B cell (primary cell): ENCODE measurements at regions of chr11 and their contacts with region 1.

Region 1: DNA sequence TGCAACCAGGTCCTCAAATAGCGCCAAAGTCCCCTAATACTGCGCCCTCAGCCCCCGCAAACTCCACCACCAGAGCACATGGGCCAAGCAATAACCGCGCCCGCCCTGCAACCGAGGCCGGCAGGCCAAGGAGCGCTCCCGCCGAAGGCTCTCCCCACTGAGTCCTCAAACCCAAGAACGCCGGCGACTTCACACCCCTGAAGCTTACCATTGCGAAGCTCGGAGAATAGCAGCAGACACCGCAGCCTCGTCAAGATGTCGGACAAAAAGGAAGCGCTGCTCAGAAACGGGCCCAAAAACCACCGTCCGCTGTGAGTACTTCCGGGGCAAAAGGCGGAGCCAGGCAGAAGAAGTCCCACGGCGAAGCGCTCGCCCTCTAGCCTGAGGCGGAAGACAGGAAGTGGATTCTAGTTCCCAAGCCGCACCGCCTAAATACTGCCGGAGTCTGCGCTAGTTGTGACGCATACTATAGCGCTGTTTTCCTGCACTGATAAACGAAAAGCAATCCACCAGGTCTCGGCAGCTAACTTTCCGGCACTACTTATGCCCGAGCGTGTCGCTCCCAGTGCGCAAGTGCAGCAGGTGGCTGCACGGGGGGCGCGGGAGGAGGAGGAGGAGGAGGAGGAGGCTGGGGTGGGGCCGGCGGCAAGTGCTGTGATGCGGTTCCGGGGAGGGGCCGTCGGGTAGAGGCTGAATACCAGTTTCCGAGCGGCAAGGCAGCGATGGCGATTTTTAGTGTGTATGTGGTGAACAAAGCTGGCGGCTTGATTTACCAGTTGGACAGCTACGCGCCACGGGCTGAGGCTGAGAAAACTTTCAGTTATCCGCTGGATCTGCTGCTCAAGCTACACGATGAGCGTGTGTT is at the starts of genes RPS25 and TRAPPC4:
- DNase-seq: peak; percentile 98
- ATAC-seq: peak; percentile 91
- H3K4me3 ChIP-seq: peak within 1 kb of the TSS; percentile 85 to 98 (median 93)
- H3K4me3 Mint-ChIP-seq: peak within 1 kb of the TSS; percentile 100
- H3K27ac ChIP-seq: peak within 1 kb of the TSS; percentile 91 to 92
- H3K27ac Mint-ChIP-seq: peak within 1 kb of the TSS; percentile 100
- H3K4me1 ChIP-seq: peaks cover 27 to 34% of the 10 kb centered on the region in 2 donors
- H3K4me1 Mint-ChIP-seq: peaks cover 46% of the 10 kb centered on the region
- H3K27me3 ChIP-seq: no peaks in the 10 kb centered on the region
- H3K27me3 Mint-ChIP-seq: no peaks in the 10 kb centered on the region
- CTCF ChIP-seq: no peak
- total RNA-seq, gene RPS25: 1,713 and 1,823 TPM in 2 replicates
- total RNA-seq, gene TRAPPC4: 61.5 and 64.5 TPM in 2 replicates

Region 2: DNA sequence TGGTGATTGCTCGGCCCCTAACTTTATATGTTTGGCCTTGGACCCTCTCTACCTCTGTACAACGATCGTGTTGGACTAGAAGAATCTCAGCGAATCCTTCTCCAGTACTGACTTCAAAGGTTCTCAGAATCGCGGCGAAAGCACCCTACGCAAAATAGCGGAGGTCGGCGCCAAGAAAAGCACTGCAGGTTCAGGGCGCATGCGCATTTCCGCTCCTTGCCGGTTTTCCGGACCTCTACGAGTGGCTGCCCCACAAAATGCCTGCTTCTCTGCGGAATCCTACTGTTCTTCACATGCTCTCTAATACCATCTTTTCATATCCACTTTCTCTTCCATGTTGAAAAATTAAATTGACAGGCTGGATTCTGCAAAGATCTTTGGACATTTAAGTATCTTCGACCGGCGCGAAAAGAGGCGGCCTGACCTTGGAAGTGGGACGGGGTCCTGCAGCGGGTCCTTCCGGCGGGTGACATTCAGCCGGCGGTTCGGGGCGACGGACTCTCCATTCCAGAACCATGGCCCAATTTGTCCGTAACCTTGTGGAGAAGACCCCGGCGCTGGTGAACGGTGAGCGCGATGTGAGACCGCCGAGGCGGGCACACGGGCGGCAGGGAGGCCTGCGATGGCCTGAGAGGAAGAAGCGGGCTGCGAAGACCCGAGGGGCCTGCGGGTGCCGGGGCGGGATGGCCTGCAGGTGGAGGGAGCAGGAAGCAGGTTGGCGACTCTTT is 617.0 kb before region 1 on chr11 and contains the start of gene ATP5MG:
- CTCF ChIA-PET with region 1: no interaction called
- POLR2A ChIA-PET with region 1: no interaction called
- intact Hi-C with region 1: loop called (anchors 1 kb)
- DNase-seq: peak; percentile 97
- ATAC-seq: peak; percentile 84
- H3K4me3 ChIP-seq: peak within 1 kb of the TSS; percentile 77 to 96 (median 81)
- H3K4me3 Mint-ChIP-seq: peak within 1 kb of the TSS; percentile 98
- H3K27ac ChIP-seq: peak within 1 kb of the TSS; percentile 77 to 85
- H3K27ac Mint-ChIP-seq: peak within 1 kb of the TSS; percentile 100
- H3K4me1 ChIP-seq: peaks cover 27 to 32% of the 10 kb centered on the region in 2 donors
- H3K4me1 Mint-ChIP-seq: peaks cover 55% of the 10 kb centered on the region
- H3K27me3 ChIP-seq: no peaks in the 10 kb centered on the region
- H3K27me3 Mint-ChIP-seq: no peaks in the 10 kb centered on the region
- CTCF ChIP-seq: peak; percentile 18
- total RNA-seq, gene ATP5MG: 111 and 118 TPM in 2 replicates

Region 3: DNA sequence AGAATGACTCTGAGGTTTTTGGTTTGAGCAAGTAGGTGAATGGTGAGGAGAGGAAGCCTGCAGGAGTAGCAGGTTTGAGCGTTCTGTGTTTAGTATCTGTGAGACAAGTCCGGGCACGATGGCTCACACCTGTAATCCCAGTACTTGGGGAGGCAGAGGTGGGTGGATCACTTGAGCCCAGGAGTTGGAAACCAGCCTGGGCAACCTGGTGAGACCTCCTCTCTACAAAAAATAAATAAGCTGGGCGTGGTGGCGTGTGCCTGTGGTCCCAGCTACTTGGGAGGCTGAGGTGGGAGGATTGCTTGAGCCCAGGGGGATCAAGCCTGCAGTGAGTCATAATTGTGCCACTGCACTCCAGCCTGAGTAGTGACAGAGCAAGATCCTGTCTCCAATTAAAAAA is 30.0 kb before region 1 on chr11:
- CTCF ChIA-PET with region 1: no interaction called
- POLR2A ChIA-PET with region 1: no interaction called
- intact Hi-C with region 1: no loop called
- DNase-seq: no peak
- ATAC-seq: no peak
- H3K4me3 ChIP-seq: no peak overlapping the region
- H3K4me3 Mint-ChIP-seq: no peak overlapping the region
- H3K27ac ChIP-seq: no peak overlapping the region
- H3K27ac Mint-ChIP-seq: no peak overlapping the region
- H3K4me1 ChIP-seq: no peaks in the 10 kb centered on the region
- H3K4me1 Mint-ChIP-seq: no peaks in the 10 kb centered on the region
- H3K27me3 ChIP-seq: no peaks in the 10 kb centered on the region
- H3K27me3 Mint-ChIP-seq: no peaks in the 10 kb centered on the region
- CTCF ChIP-seq: no peak

Region 4: DNA sequence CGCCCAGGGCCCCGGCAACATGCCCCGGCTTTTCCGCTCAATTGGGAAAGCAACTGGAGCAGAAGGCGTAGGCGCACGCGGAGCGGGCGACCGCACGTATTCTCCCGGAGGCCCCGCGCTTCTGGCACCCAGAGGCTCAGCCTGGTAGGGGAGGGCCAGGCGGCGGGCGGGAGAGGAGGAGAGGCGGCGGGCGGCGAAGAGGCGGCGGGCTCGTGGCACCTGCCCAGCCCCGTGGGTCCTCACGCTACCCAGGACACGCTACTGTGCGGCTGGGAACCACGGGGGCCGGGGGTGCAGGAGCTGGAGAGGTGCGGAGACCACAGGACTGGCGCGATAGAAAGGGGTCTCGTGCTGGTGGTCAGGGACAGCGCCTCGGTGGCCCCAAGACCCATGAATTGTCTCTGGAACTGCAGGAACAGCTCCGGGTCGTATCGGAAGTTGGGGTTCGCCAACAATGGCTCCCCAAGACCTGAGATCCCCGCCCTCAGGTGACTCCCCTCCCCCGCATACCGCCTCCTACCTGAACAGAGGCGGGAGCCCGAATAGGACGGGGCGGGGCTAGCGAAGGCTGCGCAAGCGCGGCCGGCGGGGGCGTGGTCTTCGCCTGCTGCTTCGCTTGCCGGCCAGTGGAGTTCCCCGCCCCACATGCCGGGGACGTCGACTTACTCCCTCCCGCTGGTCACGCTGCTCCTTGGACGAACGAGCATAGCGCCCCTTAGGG is 12.2 kb after region 1 on chr11 and contains the start of gene SLC37A4:
- CTCF ChIA-PET with region 1: interaction called, 14 read pairs
- POLR2A ChIA-PET with region 1: interaction called, 5 read pairs
- intact Hi-C with region 1: loop called (anchors 1 kb)
- DNase-seq: peak; percentile 99
- ATAC-seq: peak; percentile 96
- H3K4me3 ChIP-seq: peak within 1 kb of the TSS in 4 of 5 experiments; percentile 80 to 89 (median 86)
- H3K4me3 Mint-ChIP-seq: peak within 1 kb of the TSS; percentile 92
- H3K27ac ChIP-seq: peak within 1 kb of the TSS; percentile 46 to 74
- H3K27ac Mint-ChIP-seq: peak within 1 kb of the TSS; percentile 82
- H3K4me1 ChIP-seq: peaks cover 4 to 10% of the 10 kb centered on the region in 2 donors
- H3K4me1 Mint-ChIP-seq: peaks cover 20% of the 10 kb centered on the region
- H3K27me3 ChIP-seq: no peaks in the 10 kb centered on the region
- H3K27me3 Mint-ChIP-seq: no peaks in the 10 kb centered on the region
- CTCF ChIP-seq: no peak
- total RNA-seq, gene SLC37A4: 13.2 and 14.3 TPM in 2 replicates

Region 5: GRCh38 chr11:119067371-119068222 is 49.3 kb after region 1 on chr11 and contains the start of gene VPS11:
- CTCF ChIA-PET with region 1: interaction called, 3 read pairs
- POLR2A ChIA-PET with region 1: interaction called, 18 read pairs
- intact Hi-C with region 1: loop called (anchors 1 kb)
- DNase-seq: peak; percentile 97
- ATAC-seq: peak; percentile 96
- H3K4me3 ChIP-seq: peak within 1 kb of the TSS; percentile 72 to 98 (median 96)
- H3K4me3 Mint-ChIP-seq: peak within 1 kb of the TSS; percentile 100
- H3K27ac ChIP-seq: peak within 1 kb of the TSS; percentile 88 to 92
- H3K27ac Mint-ChIP-seq: peak within 1 kb of the TSS; percentile 98
- H3K4me1 ChIP-seq: peaks cover 15 to 28% of the 10 kb centered on the region in 2 donors
- H3K4me1 Mint-ChIP-seq: peaks cover 38% of the 10 kb centered on the region
- H3K27me3 ChIP-seq: no peaks in the 10 kb centered on the region
- H3K27me3 Mint-ChIP-seq: no peaks in the 10 kb centered on the region
- CTCF ChIP-seq: no peak
- total RNA-seq, gene VPS11: 64.7 and 71.1 TPM in 2 replicates

Region 6: GRCh38 chr11:119087747-119088241 is 69.5 kb after region 1 on chr11:
- CTCF ChIA-PET with region 1: no interaction called
- POLR2A ChIA-PET with region 1: no interaction called
- intact Hi-C with region 1: no loop called
- DNase-seq: no peak
- ATAC-seq: no peak
- H3K4me3 ChIP-seq: no peak overlapping the region
- H3K4me3 Mint-ChIP-seq: no peak overlapping the region
- H3K27ac ChIP-seq: no peak overlapping the region
- H3K27ac Mint-ChIP-seq: no peak overlapping the region
- H3K4me1 ChIP-seq: peaks cover 12 to 27% of the 10 kb centered on the region in 2 donors
- H3K4me1 Mint-ChIP-seq: peaks cover 27% of the 10 kb centered on the region
- H3K27me3 ChIP-seq: no peaks in the 10 kb centered on the region
- H3K27me3 Mint-ChIP-seq: no peaks in the 10 kb centered on the region
- CTCF ChIP-seq: no peak

Region 7: GRCh38 chr11:119175493-119176077 is 157.3 kb after region 1 on chr11:
- CTCF ChIA-PET with region 1: no interaction called
- POLR2A ChIA-PET with region 1: no interaction called
- intact Hi-C with region 1: no loop called
- DNase-seq: no peak
- ATAC-seq: no peak
- H3K4me3 ChIP-seq: no peak overlapping the region
- H3K4me3 Mint-ChIP-seq: no peak overlapping the region
- H3K27ac ChIP-seq: no peak overlapping the region
- H3K27ac Mint-ChIP-seq: no peak overlapping the region
- H3K4me1 ChIP-seq: no peaks in the 10 kb centered on the region
- H3K4me1 Mint-ChIP-seq: no peaks in the 10 kb centered on the region
- H3K27me3 ChIP-seq: no peaks in the 10 kb centered on the region
- H3K27me3 Mint-ChIP-seq: no peaks in the 10 kb centered on the region
- CTCF ChIP-seq: no peak

Region 8: GRCh38 chr11:119205574-119206510 is 187.5 kb after region 1 on chr11 and contains the start of gene CBL:
- CTCF ChIA-PET with region 1: no interaction called
- POLR2A ChIA-PET with region 1: no interaction called
- intact Hi-C with region 1: loop called (anchors 5 kb)
- DNase-seq: peak; percentile 96
- ATAC-seq: peak; percentile 88
- H3K4me3 ChIP-seq: peak within 1 kb of the TSS; percentile 93 to 98 (median 96)
- H3K4me3 Mint-ChIP-seq: peak within 1 kb of the TSS; percentile 97
- H3K27ac ChIP-seq: peak within 1 kb of the TSS; percentile 60 to 84
- H3K27ac Mint-ChIP-seq: peak within 1 kb of the TSS; percentile 94
- H3K4me1 ChIP-seq: peaks cover 18 to 20% of the 10 kb centered on the region in 2 donors
- H3K4me1 Mint-ChIP-seq: peaks cover 33% of the 10 kb centered on the region
- H3K27me3 ChIP-seq: no peaks in the 10 kb centered on the region
- H3K27me3 Mint-ChIP-seq: no peaks in the 10 kb centered on the region
- CTCF ChIP-seq: peak; percentile 78
- total RNA-seq, gene CBL: 35.2 and 38.7 TPM in 2 replicates